ENCODE measurements at regions of chr17 and their contacts with region 1.

Region 1: GRCh38 chr17:18197535-18198194 is 14.0 kb downstream of the ALKBH5 start:
- DNase-seq: no peak
- H3K4me3 ChIP-seq: no peak overlapping the region
- H3K4me3 Mint-ChIP-seq: no peak overlapping the region
- H3K27ac Mint-ChIP-seq: no peak overlapping the region
- H3K4me1 ChIP-seq: peaks cover 5% of the 10 kb centered on the region
- H3K4me1 Mint-ChIP-seq: peaks cover 5% of the 10 kb centered on the region
- H3K27me3 ChIP-seq: no peaks in the 10 kb centered on the region
- H3K27me3 Mint-ChIP-seq: no peaks in the 10 kb centered on the region
- CTCF ChIP-seq: no peak

Region 2: GRCh38 chr17:18213666-18214270 is 16.1 kb after region 1 on chr17:
- CTCF ChIA-PET with region 1: interaction called, 3 read pairs
- POLR2A ChIA-PET with region 1: no interaction called
- intact Hi-C with region 1: loop called (anchors 2 kb)
- DNase-seq: no peak
- H3K4me3 ChIP-seq: no peak overlapping the region
- H3K4me3 Mint-ChIP-seq: no peak overlapping the region
- H3K27ac Mint-ChIP-seq: no peak overlapping the region
- H3K4me1 ChIP-seq: no peaks in the 10 kb centered on the region
- H3K4me1 Mint-ChIP-seq: no peaks in the 10 kb centered on the region
- H3K27me3 ChIP-seq: no peaks in the 10 kb centered on the region
- H3K27me3 Mint-ChIP-seq: no peaks in the 10 kb centered on the region
- CTCF ChIP-seq: no peak

Region 3: GRCh38 chr17:18291718-18292540 is 94.3 kb after region 1 on chr17:
- CTCF ChIA-PET with region 1: no interaction called
- POLR2A ChIA-PET with region 1: no interaction called
- intact Hi-C with region 1: no loop called
- DNase-seq: no peak
- H3K4me3 ChIP-seq: no peak overlapping the region
- H3K4me3 Mint-ChIP-seq: no peak overlapping the region
- H3K27ac Mint-ChIP-seq: no peak overlapping the region
- H3K4me1 ChIP-seq: no peaks in the 10 kb centered on the region
- H3K4me1 Mint-ChIP-seq: no peaks in the 10 kb centered on the region
- H3K27me3 ChIP-seq: no peaks in the 10 kb centered on the region
- H3K27me3 Mint-ChIP-seq: no peaks in the 10 kb centered on the region
- CTCF ChIP-seq: no peak

Measured in Caco-2 (cell line).